ENCODE measurements at regions of chr20 and their contacts with region 1.

Region 1: DNA sequence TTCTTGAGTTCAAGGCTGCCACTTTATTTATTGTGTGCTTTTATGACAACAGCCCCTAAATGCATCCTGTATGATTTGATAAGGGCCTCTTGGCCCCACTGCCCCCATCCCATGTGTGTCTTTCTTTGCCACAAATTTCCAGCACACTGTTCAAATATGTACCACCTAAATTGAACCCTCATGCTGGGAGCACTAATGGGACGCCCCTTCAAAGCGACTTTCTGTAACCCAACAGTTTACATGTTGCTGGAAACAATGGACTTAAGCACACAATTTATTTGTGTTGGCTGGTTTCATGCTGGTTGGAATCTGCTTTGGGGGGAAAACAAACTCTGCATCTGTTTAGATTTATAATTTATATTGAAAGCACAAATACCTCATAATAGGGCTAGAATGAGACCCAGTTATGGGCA is 10.2 kb upstream of the RIPOR3 start:
- DNase-seq: no peak
- H3K4me3 ChIP-seq: no peak overlapping the region
- H3K4me3 Mint-ChIP-seq: no peak overlapping the region
- H3K27ac Mint-ChIP-seq: peak overlapping the region; percentile 88
- H3K4me1 ChIP-seq: peaks cover 41% of the 10 kb centered on the region
- H3K4me1 Mint-ChIP-seq: peaks cover 46% of the 10 kb centered on the region
- H3K27me3 ChIP-seq: no peaks in the 10 kb centered on the region
- H3K27me3 Mint-ChIP-seq: no peaks in the 10 kb centered on the region
- CTCF ChIP-seq: no peak

Region 2: GRCh38 chr20:50395258-50395729 is 306.3 kb before region 1 on chr20:
- CTCF ChIA-PET with region 1: no interaction called
- POLR2A ChIA-PET with region 1: no interaction called
- intact Hi-C with region 1: no loop called
- DNase-seq: no peak
- H3K4me3 ChIP-seq: no peak overlapping the region
- H3K4me3 Mint-ChIP-seq: no peak overlapping the region
- H3K27ac Mint-ChIP-seq: no peak overlapping the region
- H3K4me1 ChIP-seq: peaks cover 45% of the 10 kb centered on the region
- H3K4me1 Mint-ChIP-seq: peaks cover 28% of the 10 kb centered on the region
- H3K27me3 ChIP-seq: no peaks in the 10 kb centered on the region
- H3K27me3 Mint-ChIP-seq: no peaks in the 10 kb centered on the region
- CTCF ChIP-seq: no peak

Region 3: GRCh38 chr20:50670126-50670862 is 31.3 kb before region 1 on chr20:
- CTCF ChIA-PET with region 1: interaction called, 15 read pairs
- POLR2A ChIA-PET with region 1: interaction called, 7 read pairs
- intact Hi-C with region 1: loop called (anchors 1 kb)
- DNase-seq: peak; percentile 86 to 89
- H3K4me3 ChIP-seq: no peak overlapping the region
- H3K4me3 Mint-ChIP-seq: no peak overlapping the region
- H3K27ac Mint-ChIP-seq: peak overlapping the region; percentile 71
- H3K4me1 ChIP-seq: peaks cover 82% of the 10 kb centered on the region
- H3K4me1 Mint-ChIP-seq: peaks cover 76% of the 10 kb centered on the region
- H3K27me3 ChIP-seq: no peaks in the 10 kb centered on the region
- H3K27me3 Mint-ChIP-seq: no peaks in the 10 kb centered on the region
- CTCF ChIP-seq: no peak

Region 4: GRCh38 chr20:50762435-50763201 is 61.1 kb after region 1 on chr20:
- CTCF ChIA-PET with region 1: no interaction called
- POLR2A ChIA-PET with region 1: no interaction called
- intact Hi-C with region 1: loop called (anchors 1 kb)
- DNase-seq: peak; percentile 54 to 72
- H3K4me3 ChIP-seq: no peak overlapping the region
- H3K4me3 Mint-ChIP-seq: peak overlapping the region; percentile 78
- H3K27ac Mint-ChIP-seq: peak overlapping the region; percentile 100
- H3K4me1 ChIP-seq: peaks cover 87% of the 10 kb centered on the region
- H3K4me1 Mint-ChIP-seq: peaks cover 82% of the 10 kb centered on the region
- H3K27me3 ChIP-seq: no peaks in the 10 kb centered on the region
- H3K27me3 Mint-ChIP-seq: no peaks in the 10 kb centered on the region
- CTCF ChIP-seq: no peak

Region 5: DNA sequence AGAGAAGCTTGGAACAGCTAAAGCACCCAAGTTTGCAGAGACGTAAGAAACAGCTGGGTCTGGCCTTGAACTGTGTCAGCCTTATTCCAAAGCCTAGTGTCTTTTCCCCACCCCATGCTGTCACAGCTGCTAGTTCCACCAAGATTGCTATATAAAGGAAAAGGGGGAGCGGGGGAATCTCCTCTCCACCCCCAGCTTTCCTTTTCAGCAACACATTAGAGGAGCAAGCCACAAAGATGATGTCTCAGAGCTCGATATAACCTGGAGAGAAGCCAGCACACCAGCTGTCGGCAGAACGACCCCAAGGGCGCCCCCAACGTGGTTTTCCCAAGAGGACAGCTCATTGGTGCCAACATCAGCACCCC is 1030.2 kb after region 1 on chr20:
- CTCF ChIA-PET with region 1: no interaction called
- POLR2A ChIA-PET with region 1: no interaction called
- intact Hi-C with region 1: no loop called
- DNase-seq: no peak
- H3K4me3 ChIP-seq: no peak overlapping the region
- H3K4me3 Mint-ChIP-seq: no peak overlapping the region
- H3K27ac Mint-ChIP-seq: no peak overlapping the region
- H3K4me1 ChIP-seq: peaks cover 20% of the 10 kb centered on the region
- H3K4me1 Mint-ChIP-seq: peaks cover 35% of the 10 kb centered on the region
- H3K27me3 ChIP-seq: no peaks in the 10 kb centered on the region
- H3K27me3 Mint-ChIP-seq: no peaks in the 10 kb centered on the region
- CTCF ChIP-seq: no peak

Measured in Caco-2 (cell line).